ENCODE measurements at regions of chr2 and their contacts with region 1.

Region 1: DNA sequence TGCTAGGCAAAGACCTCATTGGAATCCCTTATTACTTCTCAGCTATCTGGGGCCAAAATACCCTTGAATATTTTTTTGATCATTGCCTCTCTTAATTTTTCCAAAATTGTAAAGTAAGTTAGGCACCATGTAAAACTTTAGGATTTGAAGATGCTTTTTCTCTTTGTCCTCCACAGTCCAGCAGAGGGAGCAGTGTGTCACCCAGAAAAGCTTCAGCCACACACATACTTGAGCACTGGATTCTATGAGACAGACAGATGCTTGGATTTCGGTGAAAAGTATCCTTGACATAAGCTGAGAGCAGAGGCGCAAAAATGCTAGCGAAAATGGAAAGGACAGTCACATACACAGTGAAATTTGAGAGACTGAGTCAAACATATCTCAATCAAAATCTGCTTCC is 74.7 kb upstream of the KCNJ3 start:
- DNase-seq: peak; percentile 35
- H3K4me3 ChIP-seq: no peak overlapping the region
- H3K27ac ChIP-seq: no peak overlapping the region
- H3K4me1 ChIP-seq: no peaks in the 10 kb centered on the region
- CTCF ChIP-seq: peak; percentile 82

Region 2: DNA sequence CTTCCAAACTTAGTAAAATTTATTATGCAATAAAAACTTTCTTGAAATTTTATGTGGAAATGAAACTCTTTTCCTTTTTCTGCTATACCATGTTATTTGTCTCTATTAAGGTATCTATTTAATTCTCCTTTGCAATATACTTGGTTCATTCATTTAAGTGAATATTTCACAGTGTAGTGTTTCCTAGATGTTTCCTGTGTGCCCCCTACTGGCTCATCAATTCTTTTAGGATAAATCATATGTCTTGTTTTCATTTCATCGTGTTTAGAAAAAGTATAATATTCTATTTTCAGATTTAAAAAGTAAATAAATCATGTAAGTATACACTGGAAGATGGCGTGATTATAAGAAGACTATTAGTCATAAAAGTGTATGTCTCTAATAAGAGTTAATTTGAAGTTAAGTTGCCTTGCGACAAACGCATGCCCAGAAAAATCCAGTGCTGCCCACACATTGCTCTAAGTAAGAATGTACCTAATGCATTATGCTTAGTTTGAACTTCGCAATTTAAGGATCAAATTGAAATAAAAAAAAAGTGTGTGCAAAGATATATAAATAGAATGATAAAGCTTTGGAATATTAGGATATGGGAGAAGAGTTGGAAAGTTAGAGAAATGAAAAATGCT is 600.1 kb after region 1 on chr2:
- CTCF ChIA-PET with region 1: no interaction called
- POLR2A ChIA-PET with region 1: no interaction called
- intact Hi-C with region 1: loop called (anchors 5 kb)
- DNase-seq: peak; percentile 50
- H3K4me3 ChIP-seq: no peak overlapping the region
- H3K27ac ChIP-seq: no peak overlapping the region
- H3K4me1 ChIP-seq: no peaks in the 10 kb centered on the region
- CTCF ChIP-seq: peak; percentile 91

Region 3: DNA sequence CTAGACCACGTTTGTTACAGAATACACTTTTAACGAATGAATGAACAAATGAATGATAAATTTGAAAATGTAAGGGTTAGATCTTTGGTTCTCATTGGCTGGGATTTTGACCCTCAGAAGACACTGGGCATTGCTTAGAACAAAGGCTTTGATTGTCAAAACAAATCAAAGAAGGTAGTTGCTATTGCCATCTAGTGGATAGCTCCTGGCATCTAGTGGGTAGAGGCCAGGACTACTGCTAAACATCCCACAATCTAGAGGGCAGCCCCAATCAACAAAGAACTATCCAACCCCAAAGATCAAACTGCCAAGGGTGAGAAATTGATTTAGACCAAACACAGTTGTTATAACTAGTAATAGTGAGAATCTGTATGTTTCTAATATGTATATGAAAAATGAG is 627.0 kb after region 1 on chr2:
- CTCF ChIA-PET with region 1: no interaction called
- POLR2A ChIA-PET with region 1: no interaction called
- intact Hi-C with region 1: loop called (anchors 2 kb)
- DNase-seq: peak; percentile 55
- H3K4me3 ChIP-seq: no peak overlapping the region
- H3K27ac ChIP-seq: no peak overlapping the region
- H3K4me1 ChIP-seq: no peaks in the 10 kb centered on the region
- CTCF ChIP-seq: peak; percentile 81

Region 4: DNA sequence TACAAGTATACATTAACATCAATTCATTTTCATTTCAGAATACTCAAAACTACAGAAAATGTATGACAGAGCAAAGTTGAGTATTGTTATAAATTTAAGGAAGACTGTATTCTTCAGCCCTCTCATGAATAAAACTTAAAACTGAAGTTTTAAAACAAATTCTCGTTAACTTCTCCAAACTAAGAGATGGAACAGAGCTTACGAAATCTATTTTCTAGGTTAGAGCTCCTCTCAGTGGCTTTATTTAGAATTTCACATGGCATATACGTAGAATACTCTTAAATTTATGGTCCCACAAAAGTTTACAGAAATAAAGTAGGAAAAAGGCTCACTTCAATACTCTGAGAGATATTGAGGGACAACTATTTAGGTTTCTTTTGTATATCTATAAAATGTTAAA is 686.8 kb after region 1 on chr2:
- CTCF ChIA-PET with region 1: no interaction called
- POLR2A ChIA-PET with region 1: no interaction called
- intact Hi-C with region 1: loop called (anchors 5 kb)
- DNase-seq: peak; percentile 50
- H3K4me3 ChIP-seq: no peak overlapping the region
- H3K27ac ChIP-seq: no peak overlapping the region
- H3K4me1 ChIP-seq: no peaks in the 10 kb centered on the region
- CTCF ChIP-seq: peak; percentile 86

Measured in OCI-LY7 (cell line).